ENCODE measurements at regions of chr2 and their contacts with region 1.

Region 1: DNA sequence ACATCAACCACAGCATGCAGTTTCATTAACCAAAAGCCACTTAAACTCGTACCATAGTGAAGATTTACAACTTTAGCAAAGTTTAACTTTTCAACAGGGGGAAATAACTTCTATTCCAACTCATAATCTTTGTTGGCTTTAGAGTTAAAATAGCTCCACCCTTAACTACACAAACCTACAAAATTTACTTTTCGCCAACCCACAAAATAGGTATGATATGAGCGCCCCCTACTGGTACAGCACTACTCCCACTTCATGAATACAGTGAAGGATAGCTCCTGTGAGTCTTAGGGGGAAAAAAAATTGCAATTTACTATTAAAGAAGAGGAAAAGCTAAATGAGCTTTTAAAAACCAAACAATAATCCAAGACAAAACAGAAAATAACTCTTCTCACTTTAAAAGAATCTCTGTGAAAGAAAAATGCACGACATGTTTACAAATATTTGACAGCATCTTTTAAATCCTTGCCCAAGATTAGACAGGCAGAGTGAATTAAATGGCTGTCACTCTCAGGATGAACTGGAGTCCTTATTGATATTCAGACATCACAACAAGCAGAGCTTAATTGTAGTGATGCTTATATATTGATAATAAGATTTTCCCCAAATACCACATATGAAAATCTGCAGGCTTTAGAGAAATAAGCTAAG is 32.2 kb downstream of the TMEFF2 start:
- DNase-seq: peak in 1 of 2 experiments; percentile 75
- H3K4me3 ChIP-seq: no peak overlapping the region
- H3K27ac ChIP-seq: no peak overlapping the region
- H3K4me1 ChIP-seq: no peaks in the 10 kb centered on the region
- H3K27me3 ChIP-seq: no peaks in the 10 kb centered on the region
- CTCF ChIP-seq: peak in 2 of 3 experiments; percentile 67 to 79; a peak in 3 of 4 replicates
- EP300 ChIP-seq: no peak
- POLR2A ChIP-seq: no peak
- RAD21 ChIP-seq: peak; percentile 92 to 94

Region 2: GRCh38 chr2:191818725-191819350 is 343.7 kb before region 1 on chr2:
- CTCF ChIA-PET with region 1: interaction called, 33 read pairs
- POLR2A ChIA-PET with region 1: no interaction called
- DNase-seq: no peak
- H3K4me3 ChIP-seq: no peak overlapping the region
- H3K27ac ChIP-seq: no peak overlapping the region
- H3K4me1 ChIP-seq: no peaks in the 10 kb centered on the region
- H3K27me3 ChIP-seq: no peaks in the 10 kb centered on the region
- CTCF ChIP-seq: no peak
- EP300 ChIP-seq: no peak
- POLR2A ChIP-seq: no peak
- RAD21 ChIP-seq: no peak

Region 3: GRCh38 chr2:191950132-191950874 is 212.2 kb before region 1 on chr2:
- CTCF ChIA-PET with region 1: interaction called, 19 read pairs
- POLR2A ChIA-PET with region 1: no interaction called
- DNase-seq: no peak
- H3K4me3 ChIP-seq: no peak overlapping the region
- H3K27ac ChIP-seq: no peak overlapping the region
- H3K4me1 ChIP-seq: no peaks in the 10 kb centered on the region
- H3K27me3 ChIP-seq: no peaks in the 10 kb centered on the region
- CTCF ChIP-seq: no peak
- EP300 ChIP-seq: no peak
- POLR2A ChIP-seq: no peak
- RAD21 ChIP-seq: no peak

Region 4: GRCh38 chr2:192140236-192140839 is 22.2 kb before region 1 on chr2:
- CTCF ChIA-PET with region 1: interaction called, 14 read pairs
- POLR2A ChIA-PET with region 1: no interaction called
- DNase-seq: no peak
- H3K4me3 ChIP-seq: no peak overlapping the region
- H3K27ac ChIP-seq: no peak overlapping the region
- H3K4me1 ChIP-seq: peaks cover 0 to 3% (median 1%) of the 10 kb centered on the region in 4 experiments; a peak in 1 of 7 replicates
- H3K27me3 ChIP-seq: no peaks in the 10 kb centered on the region
- CTCF ChIP-seq: no peak
- EP300 ChIP-seq: no peak
- POLR2A ChIP-seq: no peak
- RAD21 ChIP-seq: no peak

Region 5: DNA sequence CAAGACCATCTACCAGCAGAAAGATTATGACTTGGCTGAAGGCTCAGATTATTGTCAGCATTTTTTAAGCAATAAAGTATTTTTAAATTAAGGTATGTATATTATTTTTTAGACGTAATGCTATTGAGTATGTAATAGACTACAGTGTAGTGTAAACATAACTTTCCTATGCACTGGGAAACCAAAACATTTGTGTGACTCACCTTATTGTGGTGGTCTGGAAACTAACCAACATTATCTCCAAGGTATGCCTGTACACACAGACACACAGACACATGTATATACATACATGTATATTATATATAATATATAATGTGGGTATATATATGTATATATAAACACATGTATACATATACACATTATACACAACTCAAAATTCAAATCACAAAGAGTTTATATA is 41.4 kb after region 1 on chr2:
- CTCF ChIA-PET with region 1: no interaction called
- POLR2A ChIA-PET with region 1: no interaction called
- DNase-seq: no peak
- H3K4me3 ChIP-seq: no peak overlapping the region
- H3K27ac ChIP-seq: no peak overlapping the region
- H3K4me1 ChIP-seq: no peaks in the 10 kb centered on the region
- H3K27me3 ChIP-seq: peaks cover 0 to 1% (median 0%) of the 10 kb centered on the region in 4 experiments; a peak in 1 of 7 replicates
- CTCF ChIP-seq: no peak
- EP300 ChIP-seq: no peak
- POLR2A ChIP-seq: no peak
- RAD21 ChIP-seq: no peak

Measured in H1 (cell line).